Panc1 (cell line): ENCODE measurements at regions of chr6 and their contacts with region 1.

Region 1: GRCh38 chr6:10779076-10779475 is 31.5 kb downstream of the TMEM14B start:
- DNase-seq: no peak
- ATAC-seq: 0 out of 2 replicates have a peak, but pooled peaks have one; percentile 17
- H3K4me3 ChIP-seq: no peak overlapping the region
- H3K27ac ChIP-seq: no peak overlapping the region
- H3K4me1 ChIP-seq: no peaks in the 10 kb centered on the region
- H3K27me3 ChIP-seq: no peaks in the 10 kb centered on the region
- CTCF ChIP-seq: no peak

Region 2: DNA sequence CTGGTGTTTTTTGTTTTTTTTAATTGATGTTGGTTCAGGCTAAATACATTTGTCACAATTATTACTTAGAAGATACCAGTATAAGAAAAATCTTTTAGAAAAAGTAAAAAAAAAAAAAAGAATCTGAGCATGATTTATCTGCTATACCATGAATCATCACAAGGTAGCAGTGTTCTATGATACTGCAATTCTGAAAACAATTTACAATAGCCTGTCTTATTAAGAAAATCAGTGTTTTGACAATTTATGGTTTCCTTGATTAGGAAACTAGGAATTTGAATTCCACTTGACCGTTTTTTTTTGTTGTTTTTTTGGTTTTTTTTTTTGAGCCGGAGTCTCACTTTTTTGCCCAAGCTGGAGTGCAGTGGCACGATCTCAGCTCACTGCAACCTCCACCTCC is 68.6 kb after region 1 on chr6:
- CTCF ChIA-PET with region 1: no interaction called
- POLR2A ChIA-PET with region 1: interaction called, 13 read pairs
- in situ Hi-C with region 1: no loop called
- intact Hi-C with region 1: no loop called
- DNase-seq: no peak
- ATAC-seq: no peak
- H3K4me3 ChIP-seq: no peak overlapping the region
- H3K27ac ChIP-seq: no peak overlapping the region
- H3K4me1 ChIP-seq: no peaks in the 10 kb centered on the region
- H3K27me3 ChIP-seq: no peaks in the 10 kb centered on the region
- CTCF ChIP-seq: peak; percentile 45; the same call in 1 of the 2 replicates

Region 3: DNA sequence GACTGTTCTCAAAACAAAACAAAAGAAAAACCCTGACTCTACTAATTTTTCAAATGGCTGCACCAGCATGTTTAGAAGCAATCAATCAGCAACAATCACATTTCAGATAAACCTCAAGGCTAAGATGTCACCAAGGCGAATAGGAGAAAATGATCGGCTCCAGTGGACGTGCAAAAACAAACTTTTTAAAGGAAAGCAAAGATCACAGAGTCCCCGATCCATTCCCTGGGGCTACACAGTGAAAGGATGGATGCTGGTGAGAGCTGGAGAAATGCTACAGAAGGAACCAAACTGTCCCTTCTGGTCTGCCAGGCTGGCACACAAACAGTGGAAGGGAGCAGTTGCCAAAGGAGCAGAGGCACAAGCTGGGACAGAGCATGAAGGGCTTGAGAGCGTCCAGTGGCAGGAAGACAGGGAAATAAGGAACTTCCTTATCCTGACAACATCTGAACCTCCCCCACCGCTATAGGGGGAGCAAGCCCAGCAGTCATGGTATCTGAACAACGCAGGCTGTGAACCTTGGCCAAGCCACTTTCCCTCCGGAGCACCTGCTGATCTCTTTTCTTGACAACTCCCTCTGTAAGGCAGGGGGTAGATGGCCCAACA is 1159.3 kb after region 1 on chr6:
- CTCF ChIA-PET with region 1: no interaction called
- POLR2A ChIA-PET with region 1: no interaction called
- in situ Hi-C with region 1: no loop called
- intact Hi-C with region 1: no loop called
- DNase-seq: no peak
- ATAC-seq: no peak
- H3K4me3 ChIP-seq: no peak overlapping the region
- H3K27ac ChIP-seq: no peak overlapping the region
- H3K4me1 ChIP-seq: no peaks in the 10 kb centered on the region
- H3K27me3 ChIP-seq: no peaks in the 10 kb centered on the region
- CTCF ChIP-seq: no peak